CD8-positive, alpha-beta T cell (primary cell): ENCODE measurements at regions of chr1 and their contacts with region 1.

Region 1: GRCh38 chr1:169794530-169795416 is at the start of gene METTL18:
- DNase-seq: peak; percentile 86 to 96 (median 91)
- ATAC-seq: peak; percentile 96
- H3K4me3 ChIP-seq: peak within 1 kb of the TSS; percentile 77 to 81
- H3K4me3 Mint-ChIP-seq: peak within 1 kb of the TSS; percentile 100
- H3K27ac ChIP-seq: peak within 1 kb of the TSS; percentile 78 to 95
- H3K27ac Mint-ChIP-seq: peak within 1 kb of the TSS; percentile 100
- H3K4me1 ChIP-seq: peaks cover 22% of the 10 kb centered on the region
- H3K4me1 Mint-ChIP-seq: peaks cover 48% of the 10 kb centered on the region
- H3K27me3 ChIP-seq: no peaks in the 10 kb centered on the region
- H3K27me3 Mint-ChIP-seq: no peaks in the 10 kb centered on the region
- CTCF ChIP-seq: peak; percentile 34
- total RNA-seq, gene METTL18: 2.2 to 3.7 TPM

Region 2: GRCh38 chr1:167936068-167936929 is 1858.5 kb before region 1 on chr1 and contains the start of gene DCAF6:
- CTCF ChIA-PET with region 1: no interaction called
- POLR2A ChIA-PET with region 1: no interaction called
- intact Hi-C with region 1: loop called in 1 of 2 experiments (anchors 5 kb)
- DNase-seq: peak; percentile 93 to 100 (median 97)
- ATAC-seq: peak; percentile 78
- H3K4me3 ChIP-seq: peak within 1 kb of the TSS; percentile 85 to 86
- H3K4me3 Mint-ChIP-seq: peak within 1 kb of the TSS; percentile 89
- H3K27ac ChIP-seq: peak within 1 kb of the TSS; percentile 91 to 96
- H3K27ac Mint-ChIP-seq: peak within 1 kb of the TSS; percentile 93
- H3K4me1 ChIP-seq: peaks cover 29% of the 10 kb centered on the region
- H3K4me1 Mint-ChIP-seq: peaks cover 54% of the 10 kb centered on the region
- H3K27me3 ChIP-seq: no peaks in the 10 kb centered on the region
- H3K27me3 Mint-ChIP-seq: no peaks in the 10 kb centered on the region
- CTCF ChIP-seq: no peak
- total RNA-seq, gene DCAF6: 12.4 to 13.0 TPM

Region 3: GRCh38 chr1:168887381-168887780 is 907.4 kb before region 1 on chr1:
- CTCF ChIA-PET with region 1: no interaction called
- POLR2A ChIA-PET with region 1: no interaction called
- intact Hi-C with region 1: no loop called
- DNase-seq: no peak
- ATAC-seq: no peak
- H3K4me3 ChIP-seq: no peak overlapping the region
- H3K4me3 Mint-ChIP-seq: no peak overlapping the region
- H3K27ac ChIP-seq: no peak overlapping the region
- H3K27ac Mint-ChIP-seq: no peak overlapping the region
- H3K4me1 ChIP-seq: no peaks in the 10 kb centered on the region
- H3K4me1 Mint-ChIP-seq: no peaks in the 10 kb centered on the region
- H3K27me3 ChIP-seq: no peaks in the 10 kb centered on the region
- H3K27me3 Mint-ChIP-seq: peaks cover 2% of the 10 kb centered on the region
- CTCF ChIP-seq: no peak

Region 4: GRCh38 chr1:169106095-169106920 is 688.5 kb before region 1 on chr1 and contains the start of gene ATP1B1:
- CTCF ChIA-PET with region 1: no interaction called
- POLR2A ChIA-PET with region 1: no interaction called
- intact Hi-C with region 1: loop called (anchors 10 kb)
- DNase-seq: peak; percentile 59 to 88 (median 78)
- ATAC-seq: peak; percentile 89
- H3K4me3 ChIP-seq: peak within 1 kb of the TSS; percentile 65 to 74
- H3K4me3 Mint-ChIP-seq: peak within 1 kb of the TSS; percentile 91
- H3K27ac ChIP-seq: no peak within 1 kb of the TSS
- H3K27ac Mint-ChIP-seq: peak within 1 kb of the TSS; percentile 23
- H3K4me1 ChIP-seq: peaks cover 24% of the 10 kb centered on the region
- H3K4me1 Mint-ChIP-seq: peaks cover 33% of the 10 kb centered on the region
- H3K27me3 ChIP-seq: peaks cover 0 to 2% of the 10 kb centered on the region in 2 experiments
- H3K27me3 Mint-ChIP-seq: peaks cover 4% of the 10 kb centered on the region
- CTCF ChIP-seq: peak; percentile 29
- total RNA-seq, gene ATP1B1: 2.6 to 3.0 TPM

Region 5: DNA sequence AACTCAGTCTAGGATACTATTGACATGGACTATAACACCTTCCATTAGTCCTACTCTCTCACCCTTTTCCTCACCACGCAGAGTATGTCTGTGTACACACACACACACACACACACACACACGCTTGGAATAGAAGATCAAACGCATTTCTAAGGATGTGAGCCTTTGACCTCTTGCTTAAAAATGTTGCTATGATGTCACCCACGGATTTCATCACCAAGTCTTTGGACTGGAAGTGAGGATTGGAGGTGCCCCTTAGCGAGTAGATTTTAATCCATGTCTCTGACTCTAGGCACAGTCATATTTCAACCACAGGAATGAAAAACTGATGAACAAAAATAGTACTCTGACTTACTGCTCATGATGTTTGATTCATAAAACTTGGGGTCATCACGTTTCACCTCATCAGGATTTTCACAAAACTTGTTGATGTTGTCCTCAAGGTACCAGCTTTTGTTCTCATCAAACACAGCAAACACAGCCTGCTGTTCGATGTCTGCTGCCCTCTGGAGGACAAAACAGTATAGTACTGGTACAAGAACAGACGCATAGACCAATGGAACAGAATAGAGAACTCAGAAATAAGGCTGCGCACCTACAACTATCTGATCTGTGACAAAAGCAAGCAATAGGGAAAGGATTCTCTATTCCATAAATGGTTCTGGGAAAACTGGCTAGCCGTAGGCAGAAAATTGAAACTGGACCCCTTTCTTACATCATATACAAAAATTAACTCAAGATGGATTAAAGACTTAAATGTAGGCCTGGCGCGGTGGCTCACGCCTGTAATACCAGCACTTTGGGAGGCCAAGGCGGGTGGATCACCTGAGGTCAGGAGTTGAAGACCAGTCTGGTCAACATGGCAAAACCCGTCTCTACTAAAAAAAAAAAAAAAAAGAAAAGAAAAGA is 248.4 kb before region 1 on chr1:
- CTCF ChIA-PET with region 1: interaction called, 3 read pairs
- POLR2A ChIA-PET with region 1: no interaction called
- intact Hi-C with region 1: loop called in 1 of 2 experiments (anchors 5 kb)
- DNase-seq: peak in 8 of 9 experiments; percentile 26 to 85 (median 52)
- ATAC-seq: peak; percentile 85
- H3K4me3 ChIP-seq: no peak overlapping the region
- H3K4me3 Mint-ChIP-seq: no peak overlapping the region
- H3K27ac ChIP-seq: no peak overlapping the region
- H3K27ac Mint-ChIP-seq: no peak overlapping the region
- H3K4me1 ChIP-seq: no peaks in the 10 kb centered on the region
- H3K4me1 Mint-ChIP-seq: no peaks in the 10 kb centered on the region
- H3K27me3 ChIP-seq: no peaks in the 10 kb centered on the region
- H3K27me3 Mint-ChIP-seq: no peaks in the 10 kb centered on the region
- CTCF ChIP-seq: peak; percentile 82

Region 6: DNA sequence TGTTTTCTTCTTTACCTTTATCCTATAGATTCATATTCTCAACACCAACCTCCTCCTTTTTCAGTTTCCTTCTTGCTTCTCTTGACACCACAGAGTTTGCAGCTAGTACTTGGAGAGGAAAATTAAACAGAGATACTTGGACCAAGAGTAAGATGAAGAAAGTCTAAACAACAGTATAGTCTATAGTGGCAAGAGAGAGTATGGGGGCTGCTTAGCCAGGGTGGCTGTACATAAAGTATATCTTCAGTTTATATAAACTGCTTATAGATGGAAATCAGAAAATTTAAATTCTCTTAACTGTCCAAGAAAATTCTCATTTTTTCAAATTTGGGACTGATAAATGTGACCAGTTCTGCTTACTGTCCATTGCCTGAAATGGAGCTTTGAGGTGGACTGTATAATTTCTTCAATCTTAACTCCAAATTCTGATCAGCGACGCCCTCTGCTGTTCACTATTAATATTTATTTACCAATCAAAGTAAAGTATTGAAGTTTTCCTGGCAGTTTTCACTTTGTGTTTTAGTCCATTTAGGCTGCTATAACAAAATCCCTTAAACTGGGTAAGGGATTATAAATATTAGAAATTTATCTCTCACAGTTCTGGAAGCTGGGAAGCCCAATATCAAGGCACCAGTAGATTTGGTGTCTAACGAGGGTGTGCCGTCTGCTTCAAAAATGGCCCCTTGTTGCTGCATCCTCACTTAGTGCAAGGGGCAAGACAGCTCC is 14.8 kb after region 1 on chr1:
- CTCF ChIA-PET with region 1: interaction called, 12 read pairs
- POLR2A ChIA-PET with region 1: no interaction called
- intact Hi-C with region 1: no loop called
- DNase-seq: peak in 3 of 9 experiments; percentile 34 to 59 (median 52)
- ATAC-seq: no peak
- H3K4me3 ChIP-seq: no peak overlapping the region
- H3K4me3 Mint-ChIP-seq: no peak overlapping the region
- H3K27ac ChIP-seq: no peak overlapping the region
- H3K27ac Mint-ChIP-seq: no peak overlapping the region
- H3K4me1 ChIP-seq: no peaks in the 10 kb centered on the region
- H3K4me1 Mint-ChIP-seq: peaks cover 2% of the 10 kb centered on the region
- H3K27me3 ChIP-seq: no peaks in the 10 kb centered on the region
- H3K27me3 Mint-ChIP-seq: no peaks in the 10 kb centered on the region
- CTCF ChIP-seq: peak; percentile 71

Region 7: DNA sequence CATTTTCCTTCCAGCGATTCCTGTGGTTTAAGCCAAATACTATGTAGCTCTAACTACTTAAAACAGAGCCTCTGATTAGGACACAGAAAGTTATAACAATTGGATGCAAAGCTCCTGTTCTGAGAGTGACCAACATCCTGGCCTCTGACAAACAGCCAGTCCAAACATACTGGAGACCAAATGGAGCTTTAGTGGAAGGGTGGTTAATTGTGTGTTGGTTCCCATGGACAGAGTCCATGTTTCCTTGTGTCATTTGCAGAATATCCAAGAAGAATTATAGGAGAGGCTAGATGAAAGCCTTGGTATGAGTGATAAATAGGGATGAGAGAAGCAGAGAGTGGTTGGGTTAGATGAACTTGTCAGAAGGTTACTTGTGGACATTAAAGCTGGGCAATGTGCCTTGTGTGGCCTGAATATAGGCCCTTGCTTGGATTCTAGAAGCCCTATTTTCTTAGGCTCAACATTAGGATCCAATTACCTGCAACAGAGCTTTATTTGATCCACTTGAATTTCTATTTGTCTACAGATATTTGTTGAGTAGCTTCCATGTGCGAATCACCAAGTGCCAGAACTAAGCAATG is 556.7 kb after region 1 on chr1:
- CTCF ChIA-PET with region 1: no interaction called
- POLR2A ChIA-PET with region 1: no interaction called
- intact Hi-C with region 1: no loop called
- DNase-seq: no peak
- ATAC-seq: no peak
- H3K4me3 ChIP-seq: no peak overlapping the region
- H3K4me3 Mint-ChIP-seq: no peak overlapping the region
- H3K27ac ChIP-seq: no peak overlapping the region
- H3K27ac Mint-ChIP-seq: no peak overlapping the region
- H3K4me1 ChIP-seq: no peaks in the 10 kb centered on the region
- H3K4me1 Mint-ChIP-seq: no peaks in the 10 kb centered on the region
- H3K27me3 ChIP-seq: no peaks in the 10 kb centered on the region
- H3K27me3 Mint-ChIP-seq: peaks cover 5% of the 10 kb centered on the region
- CTCF ChIP-seq: no peak

Region 8: DNA sequence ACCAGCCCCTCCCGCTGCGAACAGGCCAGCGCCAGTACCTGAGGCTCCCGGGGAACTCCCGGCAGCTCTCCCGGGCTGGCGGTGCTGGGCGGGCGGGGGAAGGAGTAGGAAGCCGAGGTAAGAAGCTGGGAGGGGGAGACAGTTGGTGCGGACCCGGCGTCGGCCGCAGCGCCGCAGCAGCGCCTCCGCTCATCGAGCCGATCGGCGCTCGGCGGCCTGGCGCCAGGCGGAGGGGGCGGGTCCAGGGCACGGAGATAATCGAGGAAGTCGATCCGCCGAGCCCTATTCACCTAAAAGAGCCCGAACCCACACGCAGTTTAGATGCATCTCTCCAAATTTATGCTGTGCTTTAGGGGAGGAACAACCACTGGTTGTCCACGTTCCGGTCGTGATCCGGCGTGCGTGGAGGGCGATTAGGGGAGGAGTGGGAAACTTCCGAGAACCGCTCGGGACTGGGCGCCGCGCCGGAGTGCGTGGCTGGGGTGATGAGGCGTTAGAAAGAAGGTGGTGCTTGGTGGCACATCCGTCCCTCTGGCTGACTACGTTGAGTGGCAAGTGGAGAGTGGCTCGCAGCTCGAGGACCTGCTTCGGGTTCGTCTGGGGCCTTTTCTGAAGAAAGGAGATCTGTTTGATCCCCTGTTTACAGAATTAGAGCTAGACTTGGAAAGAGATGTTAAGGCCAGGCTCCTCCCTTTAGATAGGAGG is 1947.3 kb after region 1 on chr1 and contains the start of gene VAMP4:
- CTCF ChIA-PET with region 1: no interaction called
- POLR2A ChIA-PET with region 1: no interaction called
- intact Hi-C with region 1: loop called in 1 of 2 experiments (anchors 5 kb)
- DNase-seq: peak; percentile 72 to 93 (median 85)
- ATAC-seq: peak; percentile 87
- H3K4me3 ChIP-seq: peak within 1 kb of the TSS; percentile 94 to 99
- H3K4me3 Mint-ChIP-seq: peak within 1 kb of the TSS; percentile 100
- H3K27ac ChIP-seq: peak within 1 kb of the TSS; percentile 96 to 99
- H3K27ac Mint-ChIP-seq: peak within 1 kb of the TSS; percentile 100
- H3K4me1 ChIP-seq: peaks cover 39% of the 10 kb centered on the region
- H3K4me1 Mint-ChIP-seq: peaks cover 51% of the 10 kb centered on the region
- H3K27me3 ChIP-seq: no peaks in the 10 kb centered on the region
- H3K27me3 Mint-ChIP-seq: no peaks in the 10 kb centered on the region
- CTCF ChIP-seq: no peak
- total RNA-seq, gene VAMP4: 8.4 to 8.6 TPM